Right ventricle myocardium superior (tissue), 1 donor: ENCODE measurements at regions of chr7 and their contacts with region 1.

Region 1: DNA sequence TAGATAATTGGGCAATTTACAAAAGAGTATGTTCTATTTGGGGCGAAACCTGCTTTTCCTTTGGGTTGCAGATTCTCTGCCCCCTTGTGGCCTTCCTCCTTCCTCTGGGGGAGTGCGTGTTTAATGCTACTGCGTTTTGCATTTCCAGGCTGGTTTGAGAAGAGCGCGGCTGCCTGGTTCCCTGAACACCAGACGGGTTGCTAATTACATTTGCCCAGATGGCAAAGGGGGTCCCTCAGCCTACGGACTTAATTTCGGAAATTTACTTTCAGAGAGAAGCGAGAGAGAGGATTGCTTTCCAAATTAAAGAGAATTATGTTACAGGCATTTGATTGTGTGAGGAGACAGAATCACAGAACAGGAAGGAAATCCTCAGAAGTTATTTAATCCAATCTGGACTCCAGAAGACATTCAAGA is 91.9 kb upstream of the JAZF1 start:
- DNase-seq: peak; percentile 52
- ATAC-seq: peak; percentile 80

Region 2: DNA sequence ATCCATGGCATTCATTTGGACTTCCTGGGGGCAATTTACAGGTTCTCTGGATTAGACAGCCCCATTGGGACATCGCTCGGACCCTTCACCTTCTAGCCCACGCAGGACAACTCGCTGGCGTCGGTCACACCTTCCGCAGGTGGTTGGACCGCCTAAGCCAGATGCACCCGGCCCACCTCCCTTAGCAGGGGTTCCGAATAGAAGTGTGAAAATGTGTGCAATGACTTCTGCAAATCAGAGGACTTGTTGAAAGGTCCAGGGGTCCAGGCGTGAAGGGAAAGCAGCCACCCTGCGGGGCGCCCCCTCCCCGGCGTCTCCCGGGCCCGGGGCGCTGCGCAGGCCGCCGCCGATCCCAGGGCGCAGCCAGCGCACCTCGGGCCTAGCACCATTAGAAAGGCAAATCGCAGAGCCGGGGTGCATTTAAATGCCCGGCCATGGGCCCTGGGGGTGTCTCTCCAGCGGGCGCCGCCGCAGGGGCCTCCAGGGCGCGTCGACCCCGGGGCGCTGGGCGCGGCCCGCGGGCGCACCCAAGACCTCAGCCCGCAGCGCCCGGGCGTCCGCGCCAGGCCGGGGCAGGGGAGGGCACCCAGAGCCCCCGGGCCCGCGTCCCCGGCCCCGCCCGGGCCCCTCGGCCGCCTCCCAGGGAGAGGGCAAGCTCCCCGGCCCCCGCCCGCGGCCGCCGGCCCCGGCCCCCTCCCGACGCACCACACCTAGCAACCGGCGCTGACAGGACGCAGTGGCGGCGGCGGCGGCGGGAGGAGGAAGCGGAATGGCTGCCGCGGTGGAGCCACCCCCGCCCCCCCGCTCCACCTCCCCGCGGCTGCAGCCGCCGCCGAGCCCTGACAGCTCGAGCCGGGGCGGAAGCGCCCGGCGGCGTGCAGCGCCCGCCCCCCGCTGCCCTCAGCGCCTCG is 93.1 kb before region 1 on chr7:
- intact Hi-C with region 1: loop called (anchors 10 kb)
- DNase-seq: peak; percentile 88
- ATAC-seq: peak; percentile 71

Region 3: DNA sequence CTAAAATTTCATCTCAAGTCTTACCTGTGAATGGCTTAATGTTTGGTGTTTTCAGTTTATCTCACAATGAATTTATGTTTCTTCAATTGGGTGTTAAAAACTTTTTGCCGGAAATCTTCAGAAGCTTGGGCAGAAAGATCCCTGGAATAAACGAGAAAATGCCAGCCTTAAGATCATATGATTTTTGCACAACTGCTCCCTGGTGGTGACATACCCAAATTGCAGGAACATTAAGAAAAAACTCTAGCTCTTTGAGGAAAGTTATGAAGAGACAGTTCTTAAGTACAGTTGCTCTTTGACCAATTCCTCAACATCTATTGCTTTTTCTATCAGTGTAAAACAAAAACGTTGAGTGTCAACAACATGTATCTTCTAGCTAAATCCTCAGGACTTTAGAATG is 91.6 kb after region 1 on chr7:
- intact Hi-C with region 1: no loop called
- DNase-seq: no peak
- ATAC-seq: no peak